Right ventricle myocardium inferior (tissue), 1 donor: ENCODE measurements at regions of chr2 and their contacts with region 1.

Region 1: GRCh38 chr2:100813527-100813926 is 6.4 kb upstream of the NPAS2 start:
- DNase-seq: no peak
- ATAC-seq: peak; percentile 76

Region 2: DNA sequence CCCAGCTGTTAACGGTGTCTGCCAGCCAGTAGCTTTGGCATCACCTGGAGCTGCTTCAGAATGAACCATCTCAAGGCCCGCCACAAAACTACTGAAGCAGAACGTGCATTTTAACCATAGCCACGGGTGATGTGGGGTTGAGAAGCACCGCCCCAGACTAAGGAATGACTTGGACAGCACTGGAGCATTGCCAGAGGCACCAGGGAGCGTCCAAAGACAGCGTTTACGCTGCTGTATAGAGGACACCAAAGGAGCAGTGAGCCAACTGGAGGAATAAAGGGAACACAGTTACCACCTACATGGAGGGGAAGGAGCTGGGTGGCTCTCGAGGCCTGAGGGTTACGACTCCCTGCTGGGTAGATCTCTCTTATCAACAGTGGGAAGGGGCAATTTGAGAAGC is 462.8 kb before region 1 on chr2:
- intact Hi-C with region 1: no loop called
- DNase-seq: no peak
- ATAC-seq: no peak

Region 3: DNA sequence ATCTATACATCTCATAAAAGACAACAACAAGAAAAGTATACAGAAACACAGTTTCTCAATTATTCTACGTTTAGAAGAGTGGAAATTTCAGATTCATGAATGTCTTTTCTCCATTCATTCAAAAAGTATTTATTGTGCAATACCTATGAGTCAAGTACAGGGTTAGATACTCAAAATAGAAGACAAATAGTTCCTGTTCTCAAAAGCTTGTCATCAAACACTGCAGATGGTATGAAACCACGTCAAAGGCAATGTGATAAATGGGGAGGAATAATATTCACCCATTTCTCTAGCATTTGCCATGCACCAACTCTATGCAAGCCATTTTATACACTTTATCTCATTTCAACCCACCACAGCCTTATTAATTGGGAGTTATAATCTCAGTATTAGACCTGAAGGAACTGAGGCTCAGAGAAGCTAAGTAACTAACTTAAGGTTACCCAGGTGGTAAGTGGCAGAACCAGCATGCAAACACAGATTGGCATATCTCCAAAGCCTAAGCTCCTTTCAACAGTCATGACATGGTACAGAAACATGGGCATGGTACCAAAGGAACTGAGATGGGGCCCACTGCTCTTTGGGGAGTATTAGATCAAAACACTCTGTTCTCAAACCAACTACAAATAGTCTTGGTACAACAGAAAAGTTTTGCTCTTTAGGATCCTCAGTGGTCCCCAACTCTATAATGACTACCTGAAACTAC is 60.7 kb before region 1 on chr2:
- intact Hi-C with region 1: loop called (anchors 1 kb)
- DNase-seq: no peak
- ATAC-seq: peak; percentile 81

Region 4: DNA sequence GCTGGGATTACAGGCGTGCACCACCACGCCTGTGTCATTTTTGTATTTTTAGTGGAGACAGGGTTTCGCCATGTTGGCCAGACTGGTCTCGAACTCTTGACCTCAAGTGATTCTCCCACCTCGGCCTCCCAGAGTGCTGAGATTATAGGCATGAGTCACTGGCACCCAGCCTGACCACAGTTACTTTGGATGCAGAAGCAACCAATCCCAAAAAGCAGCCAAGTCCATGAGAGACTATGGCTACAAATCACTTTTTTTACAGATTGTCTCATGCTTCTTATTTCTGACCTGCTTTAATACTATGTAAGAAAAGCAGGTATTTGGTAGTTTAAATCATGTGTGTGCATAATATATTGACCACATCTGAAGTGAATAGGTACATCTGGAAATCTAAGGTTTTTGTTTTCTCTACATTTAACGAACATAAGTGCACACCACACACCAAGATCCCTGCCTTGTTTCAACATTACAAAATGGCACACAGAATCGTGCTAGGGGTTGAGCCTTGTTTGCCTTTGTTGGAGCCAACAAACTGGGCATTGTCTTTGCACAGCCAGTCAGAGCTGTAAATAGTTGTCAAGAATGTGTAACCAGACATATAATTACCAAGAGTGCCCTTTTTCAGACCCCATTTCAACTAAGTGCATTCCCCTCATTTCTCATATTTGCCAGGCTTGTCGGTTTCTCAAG is 865.7 kb after region 1 on chr2:
- intact Hi-C with region 1: no loop called
- DNase-seq: no peak
- ATAC-seq: no peak